H1 (cell line): ENCODE measurements at regions of chr6 and their contacts with region 1.

Region 1: DNA sequence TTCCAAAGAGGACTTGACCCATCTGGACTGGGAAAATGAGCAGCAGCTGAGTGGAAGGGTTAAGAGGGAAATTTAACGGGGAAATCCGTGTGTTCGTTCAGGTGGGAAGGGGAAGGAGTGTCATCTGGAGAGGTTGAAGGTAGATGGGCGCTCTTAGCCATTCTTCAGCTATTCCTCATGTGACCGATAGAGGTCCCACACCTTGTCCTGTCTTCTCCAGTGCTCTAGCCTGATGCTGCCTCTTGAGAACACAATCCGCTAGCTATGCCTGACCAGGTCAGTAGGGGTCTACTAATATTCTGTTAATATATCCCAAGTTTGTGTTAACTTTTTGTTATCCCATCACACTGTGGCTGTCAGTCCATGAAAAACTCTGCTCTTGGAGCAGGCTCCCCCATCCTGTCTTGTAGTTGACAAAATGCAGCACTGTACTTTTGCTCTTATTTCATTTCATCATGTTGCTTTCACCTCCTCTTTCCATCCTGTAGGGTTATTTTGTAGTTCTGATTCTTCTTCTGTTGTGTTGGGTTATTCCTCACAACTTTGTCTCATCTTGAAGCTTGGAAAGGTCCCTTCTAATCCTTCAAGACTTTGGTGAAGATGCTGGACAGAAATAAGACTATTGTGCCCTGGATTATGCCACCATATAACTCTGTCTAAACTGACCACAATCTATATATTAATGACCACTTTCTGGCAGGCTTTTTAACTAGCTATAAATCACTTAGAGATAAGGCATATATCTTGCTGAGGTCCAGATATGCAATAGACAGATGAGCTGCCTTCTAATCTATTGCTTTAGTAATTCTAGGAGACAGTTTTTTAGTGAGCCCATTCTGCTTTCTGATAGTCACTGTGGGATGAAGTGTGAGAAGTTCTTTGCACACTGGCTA is 123.4 kb upstream of the SUPT3H start:
- DNase-seq: peak in 1 of 2 experiments; percentile 57
- H3K4me3 ChIP-seq: no peak overlapping the region
- H3K27ac ChIP-seq: no peak overlapping the region
- H3K4me1 ChIP-seq: peaks cover 2 to 8% (median 7%) of the 10 kb centered on the region in 4 experiments; a peak in 6 of 7 replicates
- H3K27me3 ChIP-seq: no peaks in the 10 kb centered on the region
- CTCF ChIP-seq: peak; percentile 64 to 96 (median 88)
- EP300 ChIP-seq: no peak
- POLR2A ChIP-seq: no peak
- RAD21 ChIP-seq: peak; percentile 72 to 79

Region 2: GRCh38 chr6:45488889-45489288 is 12.3 kb before region 1 on chr6:
- CTCF ChIA-PET with region 1: interaction called, 38 read pairs
- POLR2A ChIA-PET with region 1: no interaction called
- DNase-seq: no peak
- H3K4me3 ChIP-seq: no peak overlapping the region
- H3K27ac ChIP-seq: no peak overlapping the region
- H3K4me1 ChIP-seq: peaks cover 0 to 3% (median 0%) of the 10 kb centered on the region in 4 experiments; a peak in 1 of 7 replicates
- H3K27me3 ChIP-seq: no peaks in the 10 kb centered on the region
- CTCF ChIP-seq: no peak
- EP300 ChIP-seq: no peak
- POLR2A ChIP-seq: no peak
- RAD21 ChIP-seq: no peak

Region 3: GRCh38 chr6:45522486-45522885 is 21.3 kb after region 1 on chr6:
- CTCF ChIA-PET with region 1: interaction called, 10 read pairs
- POLR2A ChIA-PET with region 1: interaction called, 5 read pairs
- DNase-seq: no peak
- H3K4me3 ChIP-seq: no peak overlapping the region
- H3K27ac ChIP-seq: no peak overlapping the region
- H3K4me1 ChIP-seq: peaks cover 0 to 20% (median 1%) of the 10 kb centered on the region in 4 experiments; a peak in 4 of 7 replicates
- H3K27me3 ChIP-seq: no peaks in the 10 kb centered on the region
- CTCF ChIP-seq: no peak
- EP300 ChIP-seq: no peak
- POLR2A ChIP-seq: no peak
- RAD21 ChIP-seq: no peak

Region 4: GRCh38 chr6:45563041-45563440 is 61.9 kb after region 1 on chr6:
- CTCF ChIA-PET with region 1: interaction called, 10 read pairs
- POLR2A ChIA-PET with region 1: no interaction called
- DNase-seq: no peak
- H3K4me3 ChIP-seq: no peak overlapping the region
- H3K27ac ChIP-seq: no peak overlapping the region
- H3K4me1 ChIP-seq: no peaks in the 10 kb centered on the region
- H3K27me3 ChIP-seq: peaks cover 0 to 1% (median 0%) of the 10 kb centered on the region in 4 experiments; a peak in 1 of 7 replicates
- CTCF ChIP-seq: no peak
- EP300 ChIP-seq: no peak
- POLR2A ChIP-seq: no peak
- RAD21 ChIP-seq: no peak

Region 5: DNA sequence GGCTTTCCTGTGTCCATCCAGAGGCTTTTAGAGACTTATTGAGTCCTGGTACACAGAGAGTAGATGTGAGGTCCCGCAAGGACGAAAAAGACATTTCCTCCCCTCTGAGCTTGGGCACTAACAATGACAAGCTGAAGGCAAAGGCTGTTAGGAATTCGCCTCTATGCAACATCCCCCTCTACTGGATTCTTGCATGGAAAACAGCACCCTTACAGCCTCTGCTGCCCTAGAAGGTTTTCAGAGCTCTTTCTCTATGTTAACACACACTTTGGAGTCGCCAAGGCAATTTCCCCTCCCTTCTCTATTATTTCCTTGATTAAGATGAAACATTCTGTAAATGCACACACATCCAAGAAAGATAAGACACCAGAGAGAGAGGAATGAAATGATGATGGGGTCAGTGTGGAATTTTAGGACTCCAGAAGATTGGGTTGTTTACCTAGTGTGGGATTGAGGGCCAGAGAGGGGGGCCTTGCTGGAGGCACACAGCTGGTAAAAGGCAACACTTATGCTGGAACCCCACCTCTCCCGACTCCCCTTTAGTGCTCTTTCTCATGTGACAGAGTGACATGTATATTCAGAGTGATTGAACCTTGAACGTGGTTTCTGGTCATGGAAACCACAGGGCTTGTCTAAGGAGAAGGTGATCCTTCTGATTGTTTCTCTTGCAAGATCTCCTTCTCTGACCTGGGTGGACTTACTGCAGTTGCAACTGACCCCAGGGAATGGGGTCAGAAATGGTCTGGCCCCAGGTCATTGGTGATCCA is 213.8 kb after region 1 on chr6:
- CTCF ChIA-PET with region 1: interaction called, 14 read pairs
- POLR2A ChIA-PET with region 1: no interaction called
- DNase-seq: peak; percentile 49 to 75
- H3K4me3 ChIP-seq: no peak overlapping the region
- H3K27ac ChIP-seq: no peak overlapping the region
- H3K4me1 ChIP-seq: 0 out of 7 replicates have a peak, but pooled peaks cover 0 to 2% (median 0%) of the 10 kb centered on the region in 4 experiments
- H3K27me3 ChIP-seq: peaks cover 0 to 2% (median 0%) of the 10 kb centered on the region in 4 experiments; a peak in 1 of 7 replicates
- CTCF ChIP-seq: peak; percentile 3 to 86 (median 76)
- EP300 ChIP-seq: no peak
- POLR2A ChIP-seq: no peak
- RAD21 ChIP-seq: peak; percentile 98

Region 6: DNA sequence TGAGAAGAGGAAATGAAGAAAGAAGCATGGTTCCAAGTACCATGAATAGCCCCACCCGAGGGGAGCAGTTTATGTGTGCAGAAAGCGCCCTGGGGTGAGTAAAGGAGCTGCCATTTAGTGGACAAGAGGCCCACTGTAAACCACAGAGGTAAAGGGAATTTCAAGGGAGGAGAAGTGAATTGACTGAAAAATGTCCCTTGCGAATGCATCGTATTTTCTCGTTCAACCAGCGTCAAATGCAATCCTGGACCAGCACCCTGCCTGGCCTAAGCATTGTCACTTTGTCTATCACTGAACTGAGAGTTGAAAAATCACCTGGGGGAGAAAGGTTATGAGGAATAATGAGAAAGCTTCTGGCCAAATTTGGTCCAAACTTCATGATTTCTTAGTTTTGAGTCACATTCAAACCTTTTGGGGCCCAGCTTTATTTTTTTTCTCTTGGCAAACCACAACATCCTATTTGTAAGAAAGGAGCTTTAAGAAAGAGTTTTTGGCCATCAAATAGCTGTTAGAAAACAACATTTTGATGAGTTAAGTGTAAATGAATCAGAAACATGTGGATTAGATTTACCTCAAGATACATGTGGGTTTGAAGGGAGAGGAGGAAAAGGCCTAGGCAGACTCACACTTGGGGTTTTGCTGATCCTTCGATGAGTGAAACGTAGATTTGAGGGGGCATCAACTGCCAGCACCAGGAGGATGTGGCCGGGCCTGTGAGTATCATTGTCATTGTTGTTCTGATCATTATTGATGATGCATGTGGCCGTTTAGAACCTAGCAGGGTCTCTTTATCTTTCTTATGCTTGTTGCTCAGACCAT is 300.5 kb after region 1 on chr6:
- CTCF ChIA-PET with region 1: no interaction called
- POLR2A ChIA-PET with region 1: no interaction called
- DNase-seq: no peak
- H3K4me3 ChIP-seq: no peak overlapping the region
- H3K27ac ChIP-seq: no peak overlapping the region
- H3K4me1 ChIP-seq: no peaks in the 10 kb centered on the region
- H3K27me3 ChIP-seq: no peaks in the 10 kb centered on the region; a peak in 1 of 7 replicates
- CTCF ChIP-seq: no peak
- EP300 ChIP-seq: no peak
- POLR2A ChIP-seq: no peak
- RAD21 ChIP-seq: no peak